Calu3 (cell line): ENCODE measurements at regions of chr3 and their contacts with region 1.

Region 1: GRCh38 chr3:132210476-132211346 is 106.5 kb upstream of the ACP3 start:
- DNase-seq: peak; percentile 84
- H3K4me3 Mint-ChIP-seq: no peak overlapping the region
- H3K27ac Mint-ChIP-seq: no peak overlapping the region
- H3K4me1 Mint-ChIP-seq: peaks cover 12% of the 10 kb centered on the region
- H3K27me3 Mint-ChIP-seq: no peaks in the 10 kb centered on the region
- CTCF ChIP-seq: peak; percentile 98

Region 2: DNA sequence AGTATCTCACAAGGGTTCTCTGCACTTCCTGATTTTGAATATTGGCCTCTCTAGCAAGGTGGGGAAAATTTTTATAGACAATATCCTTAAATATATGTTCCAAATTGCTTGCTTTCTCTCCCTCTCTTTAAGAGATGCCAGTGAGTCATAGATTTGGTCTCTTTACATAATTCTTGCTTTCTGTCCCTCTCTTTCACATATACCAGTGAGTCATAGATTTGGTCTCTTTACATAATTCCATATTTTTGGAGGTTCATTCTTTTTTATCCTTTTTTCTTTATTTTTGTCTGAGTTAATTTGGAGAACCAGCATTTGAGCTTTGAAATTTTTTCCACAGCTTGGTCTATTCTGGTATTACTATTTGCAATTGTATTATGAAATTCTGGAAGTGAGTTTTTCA is 906.9 kb before region 1 on chr3:
- CTCF ChIA-PET with region 1: no interaction called
- intact Hi-C with region 1: no loop called
- DNase-seq: no peak
- H3K4me3 Mint-ChIP-seq: no peak overlapping the region
- H3K27ac Mint-ChIP-seq: no peak overlapping the region
- H3K4me1 Mint-ChIP-seq: no peaks in the 10 kb centered on the region
- H3K27me3 Mint-ChIP-seq: no peaks in the 10 kb centered on the region
- CTCF ChIP-seq: no peak

Region 3: GRCh38 chr3:131898346-131898745 is 312.4 kb before region 1 on chr3:
- CTCF ChIA-PET with region 1: no interaction called
- intact Hi-C with region 1: loop called (anchors 5 kb)
- DNase-seq: no peak
- H3K4me3 Mint-ChIP-seq: no peak overlapping the region
- H3K27ac Mint-ChIP-seq: no peak overlapping the region
- H3K4me1 Mint-ChIP-seq: peaks cover 7% of the 10 kb centered on the region
- H3K27me3 Mint-ChIP-seq: no peaks in the 10 kb centered on the region
- CTCF ChIP-seq: no peak

Region 4: DNA sequence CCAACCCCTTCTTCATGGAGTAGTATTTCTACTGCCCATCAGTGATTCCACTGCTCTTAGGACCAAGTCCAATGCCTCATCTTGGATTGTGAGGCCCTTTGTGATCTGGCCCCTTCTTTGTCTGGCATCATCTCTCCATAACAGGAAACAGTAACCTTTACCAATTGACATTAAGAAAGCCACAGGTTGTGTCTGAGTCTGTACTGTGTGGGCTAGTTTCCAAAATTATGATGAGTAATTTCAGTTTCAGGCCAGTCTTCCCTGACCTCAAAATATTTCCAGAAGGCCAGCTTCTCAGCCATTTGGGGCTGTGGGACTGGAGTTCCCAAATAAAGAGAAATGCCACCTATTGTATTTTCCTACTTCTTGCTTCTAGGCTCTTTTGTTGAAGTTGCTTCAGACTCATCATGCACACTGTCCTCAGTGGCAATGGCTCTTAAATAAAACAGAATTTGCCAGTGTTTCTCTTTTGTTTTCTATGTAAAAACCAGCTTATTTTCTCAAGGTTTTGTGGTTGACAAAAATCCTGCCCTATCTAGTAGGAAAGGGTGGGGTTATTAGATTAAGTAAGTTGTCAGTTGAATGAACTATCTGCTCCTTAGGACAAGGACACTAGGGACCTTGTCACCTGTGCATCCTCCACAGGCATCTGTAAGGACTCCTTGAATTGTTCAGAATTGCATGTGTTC is 339.3 kb after region 1 on chr3:
- CTCF ChIA-PET with region 1: no interaction called
- intact Hi-C with region 1: no loop called
- DNase-seq: no peak
- H3K4me3 Mint-ChIP-seq: no peak overlapping the region
- H3K27ac Mint-ChIP-seq: no peak overlapping the region
- H3K4me1 Mint-ChIP-seq: peaks cover 12% of the 10 kb centered on the region
- H3K27me3 Mint-ChIP-seq: no peaks in the 10 kb centered on the region
- CTCF ChIP-seq: no peak